Esophagus muscularis mucosa (tissue), 4 donors: ENCODE measurements at regions of chr10 and their contacts with region 1.

Region 1: GRCh38 chr10:95864906-95865813 is 42.6 kb upstream of the CC2D2B start:
- DNase-seq: peak; percentile 91
- H3K4me3 ChIP-seq: no peak overlapping the region
- H3K27ac ChIP-seq: peak overlapping the region; percentile 8 to 62 (median 20)
- H3K4me1 ChIP-seq: peaks cover 0 to 18% (median 4%) of the 10 kb centered on the region in 4 donors
- H3K27me3 ChIP-seq: no peaks in the 10 kb centered on the region
- CTCF ChIP-seq: peak; percentile 57 to 71 (median 68)
- EP300 ChIP-seq: no peak
- POLR2A ChIP-seq: no peak

Region 2: GRCh38 chr10:95693668-95694534 is 171.3 kb before region 1 on chr10 and contains the start of gene TCTN3:
- intact Hi-C with region 1: loop called (anchors 1 kb)
- DNase-seq: peak; percentile 99
- H3K4me3 ChIP-seq: peak within 1 kb of the TSS; percentile 75 to 86 (median 76)
- H3K27ac ChIP-seq: peak within 1 kb of the TSS; percentile 79 to 92 (median 88)
- H3K4me1 ChIP-seq: peaks cover 16 to 37% (median 24%) of the 10 kb centered on the region in 4 donors
- H3K27me3 ChIP-seq: no peaks in the 10 kb centered on the region
- CTCF ChIP-seq: peak; percentile 98 to 100 (median 99)
- EP300 ChIP-seq: no peak
- POLR2A ChIP-seq: no peak
- total RNA-seq, gene TCTN3: 15.4 to 23.5 (median 21.8) TPM